Common myeloid progenitor, CD34-positive (primary cell): ENCODE measurements at regions of chr4 and their contacts with region 1.

Region 1: GRCh38 chr4:13654158-13654797 is 26.8 kb upstream of the BOD1L1 start:
- DNase-seq: peak; percentile 65 to 85 (median 83)
- H3K4me3 ChIP-seq: peak overlapping the region; percentile 41 to 81 (median 67)
- H3K27ac ChIP-seq: no peak overlapping the region
- H3K4me1 ChIP-seq: peaks cover 0 to 13% (median 9%) of the 10 kb centered on the region in 4 experiments
- H3K27me3 ChIP-seq: no peaks in the 10 kb centered on the region

Region 2: GRCh38 chr4:13640149-13640940 is 13.9 kb before region 1 on chr4:
- CTCF ChIA-PET with region 1: interaction called, 21 read pairs
- POLR2A ChIA-PET with region 1: no interaction called
- DNase-seq: peak in 1 of 3 donors; percentile 16
- H3K4me3 ChIP-seq: no peak overlapping the region
- H3K27ac ChIP-seq: no peak overlapping the region
- H3K4me1 ChIP-seq: peaks cover 0 to 4% (median 1%) of the 10 kb centered on the region in 4 experiments
- H3K27me3 ChIP-seq: peaks cover 0 to 2% (median 0%) of the 10 kb centered on the region in 5 experiments

Region 3: GRCh38 chr4:13750594-13750993 is 96.3 kb after region 1 on chr4:
- CTCF ChIA-PET with region 1: no interaction called
- POLR2A ChIA-PET with region 1: no interaction called
- DNase-seq: no peak
- H3K4me3 ChIP-seq: no peak overlapping the region
- H3K27ac ChIP-seq: no peak overlapping the region
- H3K4me1 ChIP-seq: no peaks in the 10 kb centered on the region
- H3K27me3 ChIP-seq: no peaks in the 10 kb centered on the region

Region 4: DNA sequence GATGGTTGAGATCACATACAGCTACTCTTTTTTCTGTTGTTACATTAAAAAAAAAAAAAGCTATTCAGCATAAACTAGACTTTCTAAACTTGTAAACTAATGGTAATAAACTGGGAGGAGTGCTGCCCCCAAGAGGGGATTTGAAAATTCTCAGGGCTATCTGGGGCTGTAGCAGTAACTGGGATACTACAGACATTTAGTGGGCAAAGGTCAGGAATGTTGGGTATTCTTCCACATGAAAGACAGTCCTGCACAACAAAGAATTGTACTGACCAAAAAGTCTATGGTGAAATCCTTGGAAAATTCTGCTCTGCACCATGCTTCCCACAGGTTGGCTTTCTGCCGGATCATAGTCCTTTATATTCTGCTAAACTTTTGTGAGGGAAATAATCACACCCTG is 205.8 kb after region 1 on chr4:
- CTCF ChIA-PET with region 1: interaction called, 45 read pairs
- POLR2A ChIA-PET with region 1: no interaction called
- DNase-seq: peak; percentile 13 to 47 (median 38)
- H3K4me3 ChIP-seq: no peak overlapping the region
- H3K27ac ChIP-seq: no peak overlapping the region
- H3K4me1 ChIP-seq: peaks cover 0 to 2% (median 0%) of the 10 kb centered on the region in 4 experiments
- H3K27me3 ChIP-seq: no peaks in the 10 kb centered on the region

Region 5: DNA sequence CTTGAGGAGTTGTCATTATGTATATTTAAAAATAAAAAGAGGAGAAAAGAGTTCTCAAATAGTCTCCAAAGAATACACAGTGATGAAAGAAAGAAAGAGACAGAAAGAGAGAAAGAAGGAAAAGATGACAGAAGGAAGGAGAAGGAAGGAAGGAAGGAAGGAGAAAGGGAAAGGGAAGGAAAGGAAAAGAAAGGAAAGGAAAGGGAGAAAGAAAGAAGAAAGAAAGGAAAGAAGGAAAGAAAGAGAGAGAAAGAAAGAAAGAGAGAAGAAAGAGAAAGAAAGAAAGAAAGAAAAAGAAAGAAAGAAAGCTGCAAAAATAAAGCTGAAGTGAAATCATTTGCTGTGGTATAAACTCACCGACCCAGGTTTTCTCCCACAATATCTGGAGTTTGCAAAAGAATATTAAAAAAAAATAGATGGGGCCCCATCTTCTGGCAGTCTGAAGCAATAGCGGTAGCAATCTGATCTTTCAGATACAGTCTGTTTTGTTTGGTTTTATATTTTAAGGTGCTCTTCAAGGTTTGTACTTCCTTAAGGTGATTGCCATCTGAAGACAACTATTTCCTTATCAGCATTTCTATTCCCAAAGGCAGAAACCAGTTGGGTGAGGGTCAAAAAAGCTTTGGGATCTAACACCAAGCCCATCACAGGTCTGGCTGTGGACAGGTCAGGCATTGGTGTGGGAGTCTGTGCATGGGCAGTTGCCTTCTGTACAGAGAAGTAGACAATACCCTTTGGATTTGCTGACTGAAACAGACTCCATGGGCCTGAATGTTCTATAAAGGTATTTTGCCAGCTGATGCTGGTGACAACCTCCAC is 1508.4 kb after region 1 on chr4:
- CTCF ChIA-PET with region 1: interaction called, 10 read pairs
- POLR2A ChIA-PET with region 1: no interaction called
- DNase-seq: peak; percentile 48 to 70 (median 63)
- H3K4me3 ChIP-seq: no peak overlapping the region
- H3K27ac ChIP-seq: no peak overlapping the region
- H3K4me1 ChIP-seq: peaks cover 0 to 9% (median 0%) of the 10 kb centered on the region in 4 experiments
- H3K27me3 ChIP-seq: no peaks in the 10 kb centered on the region